Endothelial cell of umbilical vein (primary cell): ENCODE measurements at regions of chr3 and their contacts with region 1.

Region 1: GRCh38 chr3:179451265-179452175 is at the start of gene GNB4:
- DNase-seq: peak; percentile 96
- H3K4me3 ChIP-seq: peak within 1 kb of the TSS; percentile 43 to 93 (median 92)
- H3K27ac ChIP-seq: peak within 1 kb of the TSS; percentile 95
- H3K4me1 ChIP-seq: peaks cover 29% of the 10 kb centered on the region
- H3K27me3 ChIP-seq: no peaks in the 10 kb centered on the region
- CTCF ChIP-seq: no peak
- POLR2A ChIP-seq: peak; percentile 87
- total RNA-seq, gene GNB4: 61.9 and 62.6 TPM in 2 replicates

Region 2: DNA sequence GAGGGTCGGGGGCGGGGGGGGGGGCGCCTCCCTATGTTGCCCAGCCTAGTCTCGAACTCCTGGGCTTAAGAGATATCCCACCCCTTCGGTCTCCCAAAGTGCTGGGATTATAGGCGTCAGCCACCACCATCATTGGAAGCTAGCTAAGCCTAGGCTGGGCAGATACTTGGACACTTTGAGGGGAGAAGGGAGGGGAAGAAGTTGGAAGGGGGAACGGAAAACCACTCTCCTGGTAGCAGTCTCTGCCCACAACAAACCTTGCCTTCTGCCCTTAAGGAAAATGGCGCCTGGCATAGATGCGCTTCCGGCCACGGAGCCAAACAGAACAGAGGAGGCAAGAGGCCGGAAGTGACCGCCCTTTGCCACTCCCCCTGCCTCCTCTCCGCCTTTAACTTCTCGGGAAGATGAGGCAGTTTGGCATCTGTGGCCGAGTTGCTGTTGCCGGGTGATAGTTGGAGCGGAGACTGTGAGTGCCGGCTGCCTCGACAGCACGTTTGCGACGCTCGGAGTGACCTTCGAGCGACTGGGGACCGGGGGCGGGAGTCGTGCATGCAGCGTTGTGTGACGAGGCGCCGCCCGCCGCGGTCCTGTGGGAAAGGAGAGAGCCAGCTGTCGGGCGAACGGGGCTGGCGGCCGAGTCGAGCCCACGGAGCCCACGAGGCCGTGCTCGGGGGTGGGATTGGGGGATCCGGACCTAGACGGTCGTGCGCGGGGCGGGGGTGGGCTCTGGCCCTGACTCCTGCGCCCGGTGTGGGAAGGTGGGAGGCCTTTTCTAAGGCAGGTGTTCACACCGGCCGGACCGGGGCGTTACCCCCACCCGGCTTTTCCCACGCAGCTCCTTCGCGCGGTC is 104.0 kb before region 1 on chr3 and contains the start of gene MFN1:
- CTCF ChIA-PET with region 1: no interaction called
- POLR2A ChIA-PET with region 1: no interaction called
- dilution Hi-C with region 1: no loop called
- intact Hi-C with region 1: loop called (anchors 2 kb)
- DNase-seq: peak; percentile 97
- H3K4me3 ChIP-seq: peak within 1 kb of the TSS; percentile 38 to 99 (median 79)
- H3K27ac ChIP-seq: peak within 1 kb of the TSS; percentile 19
- H3K4me1 ChIP-seq: peaks cover 9% of the 10 kb centered on the region
- H3K27me3 ChIP-seq: no peaks in the 10 kb centered on the region
- CTCF ChIP-seq: no peak
- POLR2A ChIP-seq: peak; percentile 92
- total RNA-seq, gene MFN1: 42.9 and 52.9 TPM in 2 replicates

Region 3: DNA sequence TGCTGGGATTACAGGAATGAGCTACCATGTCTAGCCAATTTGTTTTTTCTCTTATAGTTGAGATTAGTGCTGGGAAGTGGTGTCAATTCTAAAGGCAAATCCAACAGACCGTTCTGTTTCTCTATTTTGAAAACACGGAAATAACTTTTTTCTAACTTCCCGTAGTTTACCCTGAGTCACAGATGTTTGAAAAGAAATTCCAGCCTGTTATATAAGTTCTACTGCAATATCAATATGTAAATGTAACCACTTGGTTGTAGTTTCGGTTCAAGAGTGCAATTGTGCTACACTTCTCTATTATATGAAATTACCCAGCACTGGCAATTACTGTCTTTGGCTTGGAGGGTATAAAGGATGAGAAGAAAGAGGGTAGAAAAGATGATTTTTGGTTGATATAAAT is 22.0 kb after region 1 on chr3:
- CTCF ChIA-PET with region 1: interaction called, 3 read pairs
- POLR2A ChIA-PET with region 1: no interaction called
- dilution Hi-C with region 1: no loop called
- intact Hi-C with region 1: loop called (anchors 1 kb)
- DNase-seq: peak; percentile 86
- H3K4me3 ChIP-seq: peak overlapping the region in 1 of 3 experiments; percentile 26
- H3K27ac ChIP-seq: peak overlapping the region; percentile 68
- H3K4me1 ChIP-seq: peaks cover 7% of the 10 kb centered on the region
- H3K27me3 ChIP-seq: no peaks in the 10 kb centered on the region
- CTCF ChIP-seq: no peak
- POLR2A ChIP-seq: no peak

Region 4: GRCh38 chr3:179482857-179483256 is 31.3 kb after region 1 on chr3:
- CTCF ChIA-PET with region 1: interaction called, 5 read pairs
- POLR2A ChIA-PET with region 1: no interaction called
- dilution Hi-C with region 1: no loop called
- intact Hi-C with region 1: loop called (anchors 1 kb)
- DNase-seq: peak; percentile 77
- H3K4me3 ChIP-seq: peak overlapping the region in 1 of 3 experiments; percentile 21
- H3K27ac ChIP-seq: peak overlapping the region; percentile 73
- H3K4me1 ChIP-seq: peaks cover 23% of the 10 kb centered on the region
- H3K27me3 ChIP-seq: no peaks in the 10 kb centered on the region
- CTCF ChIP-seq: no peak
- POLR2A ChIP-seq: no peak

Region 5: DNA sequence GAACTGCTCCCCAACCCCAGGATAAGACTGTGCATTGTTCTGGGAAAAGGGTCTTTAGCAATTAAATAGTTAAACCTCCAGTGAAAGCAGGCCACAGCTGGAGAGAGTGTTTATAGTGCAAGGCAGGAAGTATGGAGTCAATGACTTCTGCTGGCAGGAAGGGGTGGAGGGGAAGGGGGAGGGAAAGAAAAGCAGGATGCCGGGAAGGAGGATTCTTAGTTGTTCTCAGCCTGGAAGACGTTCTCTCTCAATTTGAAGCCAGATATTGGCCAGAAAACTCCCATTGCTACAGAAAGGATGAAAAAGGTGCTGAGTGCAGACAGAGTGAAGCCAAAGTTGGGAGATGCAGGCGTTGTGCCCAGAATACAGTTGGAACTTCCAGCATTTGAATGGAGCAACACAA is 75.5 kb after region 1 on chr3:
- CTCF ChIA-PET with region 1: interaction called, 4 read pairs
- POLR2A ChIA-PET with region 1: no interaction called
- dilution Hi-C with region 1: no loop called
- intact Hi-C with region 1: loop called (anchors 1 kb)
- DNase-seq: peak; percentile 94
- H3K4me3 ChIP-seq: peak overlapping the region in 2 of 3 experiments; percentile 18 to 40
- H3K27ac ChIP-seq: peak overlapping the region; percentile 78
- H3K4me1 ChIP-seq: peaks cover 18% of the 10 kb centered on the region
- H3K27me3 ChIP-seq: no peaks in the 10 kb centered on the region
- CTCF ChIP-seq: no peak
- POLR2A ChIP-seq: peak; percentile 31

Region 6: GRCh38 chr3:179604321-179605078 is 153.0 kb after region 1 on chr3 and contains the starts of genes MRPL47 and NDUFB5:
- CTCF ChIA-PET with region 1: no interaction called
- POLR2A ChIA-PET with region 1: no interaction called
- dilution Hi-C with region 1: no loop called
- intact Hi-C with region 1: loop called (anchors 1 kb)
- DNase-seq: peak; percentile 97
- H3K4me3 ChIP-seq: peak within 1 kb of the TSS; percentile 59 to 94 (median 77)
- H3K27ac ChIP-seq: peak within 1 kb of the TSS; percentile 84
- H3K4me1 ChIP-seq: peaks cover 14% of the 10 kb centered on the region
- H3K27me3 ChIP-seq: no peaks in the 10 kb centered on the region
- CTCF ChIP-seq: no peak
- POLR2A ChIP-seq: peak; percentile 94
- total RNA-seq, gene MRPL47: 47.0 and 51.2 TPM in 2 replicates
- total RNA-seq, gene NDUFB5: 68.3 and 74.9 TPM in 2 replicates